GM12878 (cell line): ENCODE measurements at regions of chr9 and their contacts with region 1.

Region 1: DNA sequence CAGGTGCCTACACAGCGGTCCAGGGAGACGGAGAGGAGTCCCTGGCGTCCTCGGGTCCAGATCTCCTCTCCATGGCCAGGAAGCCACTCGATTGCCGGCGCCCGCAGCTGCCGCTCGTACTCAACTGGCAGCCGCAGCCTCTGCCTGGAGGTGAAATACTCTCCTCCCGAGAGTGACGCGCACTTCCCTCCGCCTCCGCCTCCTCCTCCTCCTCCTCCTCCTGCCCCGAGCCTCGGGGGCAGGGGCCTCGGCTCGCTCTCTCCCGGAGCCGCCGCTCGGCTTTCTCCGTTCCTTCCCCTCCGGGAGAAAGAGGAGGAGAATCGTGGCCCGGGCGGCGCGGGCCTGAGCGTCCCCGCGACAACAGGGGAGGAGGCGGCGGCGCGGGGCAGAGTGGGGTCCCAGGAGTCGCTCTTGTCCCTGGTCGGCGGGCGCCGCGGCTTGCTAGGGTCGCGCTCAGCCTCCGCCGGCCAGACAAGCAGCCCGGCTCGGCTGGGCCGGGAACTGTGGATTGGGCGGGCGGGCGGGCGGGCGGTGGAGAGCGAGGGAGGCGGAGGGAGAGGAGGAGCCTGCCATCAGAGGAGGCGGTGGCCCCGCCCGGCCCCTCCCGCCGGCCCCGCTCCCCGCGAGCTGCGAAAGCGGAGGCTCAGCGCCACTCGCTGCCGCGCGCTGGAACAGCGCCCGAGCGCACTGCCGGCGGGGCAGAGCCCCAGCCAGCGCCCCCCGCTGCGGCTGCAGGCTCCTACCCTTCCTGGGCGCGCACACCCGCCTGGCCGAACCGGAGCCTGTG is at the start of gene CEMIP2:
- DNase-seq: no peak
- ATAC-seq: peak; percentile 93
- H3K4me3 ChIP-seq: peak within 1 kb of the TSS; percentile 84
- H3K27ac ChIP-seq: peak within 1 kb of the TSS; percentile 37; the same call in 1 of the 2 replicates
- H3K4me1 ChIP-seq: peaks cover 14% of the 10 kb centered on the region
- H3K27me3 ChIP-seq: peaks cover 0 to 18% of the 10 kb centered on the region in 2 experiments; a peak in 2 of 4 replicates
- CTCF ChIP-seq: peak; percentile 44 to 81 (median 59); a peak in 5 of 6 replicates
- EP300 ChIP-seq: no peak
- POLR2A ChIP-seq: peak; percentile 74
- RAD21 ChIP-seq: peak; percentile 76
- polyA plus RNA-seq, gene CEMIP2: 0.50 to 0.79 TPM

Region 2: GRCh38 chr9:71490810-71491209 is 277.8 kb before region 1 on chr9:
- CTCF ChIA-PET with region 1: no interaction called
- POLR2A ChIA-PET with region 1: no interaction called
- RAD21 ChIA-PET with region 1: no interaction called
- SMC1A ChIA-PET with region 1: interaction called, 6 read pairs
- in situ Hi-C with region 1: no loop called
- intact Hi-C with region 1: loop called (anchors 5 kb)
- DNase-seq: no peak
- ATAC-seq: peak; percentile 74
- H3K4me3 ChIP-seq: no peak overlapping the region
- H3K27ac ChIP-seq: no peak overlapping the region
- H3K4me1 ChIP-seq: no peaks in the 10 kb centered on the region
- H3K27me3 ChIP-seq: no peaks in the 10 kb centered on the region; a peak in 1 of 4 replicates
- CTCF ChIP-seq: peak; percentile 34 to 47 (median 39); a peak in 5 of 6 replicates
- EP300 ChIP-seq: no peak
- POLR2A ChIP-seq: no peak
- RAD21 ChIP-seq: 0 out of 2 replicates have a peak, but pooled peaks have one; percentile 17

Region 3: GRCh38 chr9:71628247-71628646 is 140.3 kb before region 1 on chr9:
- CTCF ChIA-PET with region 1: interaction called, 8 read pairs
- POLR2A ChIA-PET with region 1: no interaction called
- RAD21 ChIA-PET with region 1: interaction called, 5 read pairs
- SMC1A ChIA-PET with region 1: interaction called, 15 read pairs
- in situ Hi-C with region 1: no loop called
- intact Hi-C with region 1: no loop called
- DNase-seq: no peak
- ATAC-seq: no peak; the same call in 2 of the 3 replicates
- H3K4me3 ChIP-seq: no peak overlapping the region
- H3K27ac ChIP-seq: no peak overlapping the region
- H3K4me1 ChIP-seq: no peaks in the 10 kb centered on the region
- H3K27me3 ChIP-seq: no peaks in the 10 kb centered on the region
- CTCF ChIP-seq: peak; percentile 20 to 30 (median 24); a peak in 3 of 6 replicates
- EP300 ChIP-seq: no peak
- POLR2A ChIP-seq: no peak
- RAD21 ChIP-seq: 0 out of 2 replicates have a peak, but pooled peaks have one; percentile 9

Region 4: GRCh38 chr9:71703172-71703872 is 65.3 kb before region 1 on chr9:
- CTCF ChIA-PET with region 1: no interaction called
- POLR2A ChIA-PET with region 1: no interaction called
- RAD21 ChIA-PET with region 1: no interaction called
- SMC1A ChIA-PET with region 1: no interaction called
- in situ Hi-C with region 1: no loop called
- intact Hi-C with region 1: loop called (anchors 5 kb)
- DNase-seq: no peak
- ATAC-seq: no peak
- H3K4me3 ChIP-seq: no peak overlapping the region
- H3K27ac ChIP-seq: no peak overlapping the region
- H3K4me1 ChIP-seq: no peaks in the 10 kb centered on the region
- H3K27me3 ChIP-seq: no peaks in the 10 kb centered on the region
- CTCF ChIP-seq: no peak
- EP300 ChIP-seq: no peak
- POLR2A ChIP-seq: no peak
- RAD21 ChIP-seq: no peak